ENCODE measurements at regions of chr2 and their contacts with region 1.

Region 1: DNA sequence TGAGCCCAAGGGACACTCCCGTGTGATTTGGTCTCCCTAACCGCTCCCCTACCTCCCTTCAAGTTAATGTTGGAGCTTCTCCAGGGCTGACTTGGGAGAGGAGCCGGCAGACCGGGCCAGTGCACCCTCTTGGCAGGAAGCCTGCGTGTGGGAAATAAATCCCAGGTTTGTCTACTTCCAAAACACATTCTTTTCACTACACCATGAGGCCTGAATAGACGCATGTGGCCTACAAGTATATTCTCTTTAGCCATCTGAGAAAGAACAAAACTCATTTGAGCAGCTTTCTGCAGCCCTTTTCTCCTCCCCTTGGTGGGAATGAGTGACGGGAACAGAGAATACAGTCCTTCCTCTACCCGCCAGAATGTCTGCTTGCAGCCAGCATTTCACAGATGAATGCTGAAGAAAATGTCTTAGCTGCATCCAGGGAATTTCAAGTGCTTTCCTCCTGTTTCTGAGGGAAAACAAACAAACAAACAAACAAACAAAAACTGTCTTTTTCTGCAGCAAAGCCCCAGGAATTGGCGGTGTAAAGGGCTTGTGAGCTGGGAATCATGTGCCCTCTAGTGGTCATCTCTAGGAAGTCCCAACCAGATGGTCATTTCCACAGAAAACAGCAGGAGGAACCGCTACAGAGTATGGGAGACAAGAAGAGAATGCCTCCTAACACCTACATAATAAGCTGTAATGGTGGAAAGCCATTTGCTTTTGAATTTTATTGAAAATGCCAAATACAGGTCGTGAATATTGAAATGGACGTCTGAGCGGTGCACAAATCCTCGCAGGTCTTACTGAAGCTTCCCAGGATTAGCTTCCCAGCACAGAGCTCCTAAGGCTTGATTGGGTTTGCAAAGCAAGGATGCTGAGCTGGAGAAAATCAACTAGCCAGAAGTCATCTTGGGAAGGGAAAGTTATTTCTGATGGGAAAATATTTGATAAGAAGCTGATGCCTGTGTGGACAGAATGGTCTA is 41.2 kb upstream of the DAPL1 start:
- DNase-seq: peak in 2 of 5 donors; percentile 21 to 31
- H3K4me3 ChIP-seq: no peak overlapping the region
- H3K4me3 Mint-ChIP-seq: no peak overlapping the region
- H3K27ac ChIP-seq: no peak overlapping the region
- H3K27ac Mint-ChIP-seq: no peak overlapping the region
- H3K4me1 ChIP-seq: no peaks in the 10 kb centered on the region
- H3K4me1 Mint-ChIP-seq: no peaks in the 10 kb centered on the region
- H3K27me3 ChIP-seq: no peaks in the 10 kb centered on the region
- H3K27me3 Mint-ChIP-seq: peaks cover 6 to 38% of the 10 kb centered on the region in 2 donors

Region 2: DNA sequence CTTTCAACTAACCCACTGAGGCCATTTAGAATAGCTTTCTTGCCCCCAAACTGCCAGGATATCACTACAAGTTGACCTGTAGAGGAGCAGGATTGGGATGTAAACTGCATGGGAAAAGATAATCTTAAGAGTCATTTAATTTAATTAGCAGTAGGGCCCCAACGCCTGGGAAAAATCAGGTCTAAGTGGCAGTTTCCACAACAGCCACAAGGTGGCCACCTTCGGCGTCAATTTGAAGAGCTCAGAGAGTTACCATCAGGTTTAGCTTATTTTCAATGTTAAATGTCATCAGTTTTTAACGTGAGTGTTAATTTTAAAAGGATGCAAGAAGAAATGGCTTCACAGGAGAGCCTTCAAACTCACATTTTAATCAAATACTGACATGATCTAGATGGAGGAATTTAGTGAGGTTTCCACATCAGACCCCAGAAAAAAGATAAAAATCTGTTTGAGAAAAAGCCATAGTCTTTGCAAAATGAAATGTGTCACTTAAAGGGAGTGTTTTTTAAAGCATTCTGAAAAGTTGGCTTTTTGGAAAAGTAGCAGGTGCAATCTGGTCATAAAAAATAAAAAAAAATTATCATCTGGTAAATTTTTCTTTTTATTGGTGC is 729.5 kb before region 1 on chr2:
- CTCF ChIA-PET with region 1: interaction called, 47 read pairs
- POLR2A ChIA-PET with region 1: no interaction called
- DNase-seq: peak in 4 of 5 donors; percentile 13 to 54 (median 21)
- H3K4me3 ChIP-seq: no peak overlapping the region
- H3K4me3 Mint-ChIP-seq: no peak overlapping the region
- H3K27ac ChIP-seq: no peak overlapping the region
- H3K27ac Mint-ChIP-seq: no peak overlapping the region
- H3K4me1 ChIP-seq: no peaks in the 10 kb centered on the region
- H3K4me1 Mint-ChIP-seq: peaks cover 0 to 10% (median 4%) of the 10 kb centered on the region in 3 donors
- H3K27me3 ChIP-seq: no peaks in the 10 kb centered on the region
- H3K27me3 Mint-ChIP-seq: peaks cover 0 to 7% of the 10 kb centered on the region in 2 donors

Region 3: GRCh38 chr2:158034199-158034866 is 719.6 kb before region 1 on chr2:
- CTCF ChIA-PET with region 1: interaction called, 10 read pairs
- POLR2A ChIA-PET with region 1: no interaction called
- DNase-seq: no peak
- H3K4me3 ChIP-seq: no peak overlapping the region
- H3K4me3 Mint-ChIP-seq: no peak overlapping the region
- H3K27ac ChIP-seq: no peak overlapping the region
- H3K27ac Mint-ChIP-seq: peak overlapping the region in 2 of 8 donors; percentile 56 to 74
- H3K4me1 ChIP-seq: no peaks in the 10 kb centered on the region
- H3K4me1 Mint-ChIP-seq: no peaks in the 10 kb centered on the region
- H3K27me3 ChIP-seq: no peaks in the 10 kb centered on the region
- H3K27me3 Mint-ChIP-seq: peaks cover 12 to 31% of the 10 kb centered on the region in 2 donors

Region 4: DNA sequence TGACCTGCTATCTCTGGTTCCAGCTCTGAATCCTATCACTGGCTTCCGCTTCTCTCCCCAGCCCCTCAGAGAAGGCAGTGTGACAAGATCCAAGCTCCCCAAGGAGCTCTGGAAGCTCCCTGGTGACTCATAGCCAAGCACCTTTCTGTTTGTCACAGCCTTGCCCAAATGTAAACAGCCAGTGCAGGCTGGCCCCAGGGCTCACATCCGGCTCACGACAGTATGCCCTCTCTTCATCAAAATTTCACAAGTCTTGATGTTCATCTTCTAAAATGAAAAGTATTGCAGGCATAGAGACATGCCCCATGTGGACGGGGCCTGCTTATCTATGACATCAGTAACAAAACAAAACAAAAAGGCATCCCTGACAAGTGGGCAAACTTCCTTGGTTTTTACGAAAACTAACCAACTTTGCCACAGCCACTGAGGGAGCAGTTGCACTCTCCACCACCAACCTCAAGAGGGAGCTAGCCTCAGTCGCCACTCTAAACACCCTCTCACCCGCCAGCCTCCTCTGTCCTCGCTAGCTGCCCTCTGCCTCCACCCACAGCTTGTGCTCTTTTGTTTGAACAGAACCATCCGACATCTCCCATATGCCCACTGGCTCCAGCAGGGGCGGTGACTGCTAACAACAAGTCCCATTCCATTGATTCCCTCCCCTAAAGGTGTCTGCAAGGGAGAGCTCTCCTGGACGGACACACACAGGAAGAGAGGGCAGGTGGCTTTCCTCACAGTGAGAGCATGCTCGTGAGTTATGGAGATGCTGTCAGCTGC is 29.8 kb before region 1 on chr2:
- CTCF ChIA-PET with region 1: no interaction called
- POLR2A ChIA-PET with region 1: no interaction called
- DNase-seq: no peak
- H3K4me3 ChIP-seq: no peak overlapping the region
- H3K4me3 Mint-ChIP-seq: no peak overlapping the region
- H3K27ac ChIP-seq: no peak overlapping the region
- H3K27ac Mint-ChIP-seq: no peak overlapping the region
- H3K4me1 ChIP-seq: no peaks in the 10 kb centered on the region
- H3K4me1 Mint-ChIP-seq: no peaks in the 10 kb centered on the region
- H3K27me3 ChIP-seq: no peaks in the 10 kb centered on the region
- H3K27me3 Mint-ChIP-seq: peaks cover 3 to 24% of the 10 kb centered on the region in 2 donors

Region 5: DNA sequence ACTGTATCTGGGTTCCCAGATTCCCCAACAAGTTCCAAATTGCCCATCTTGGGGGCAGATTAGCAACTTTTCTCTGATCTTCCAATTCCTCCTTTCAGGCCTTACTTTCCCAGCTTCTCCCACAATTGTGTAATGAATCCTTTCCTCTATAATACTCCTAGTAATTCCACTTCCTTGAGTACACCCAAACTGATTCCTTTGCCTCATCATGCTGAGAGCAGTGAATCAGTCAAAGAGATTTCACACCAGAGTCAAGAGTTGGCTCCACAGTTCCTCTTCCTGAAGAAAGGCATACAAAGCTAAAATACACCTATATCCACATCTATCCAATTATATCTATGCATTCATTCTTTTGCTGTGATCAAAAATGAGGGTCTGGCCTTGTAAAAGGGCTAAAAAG is 12.6 kb after region 1 on chr2:
- CTCF ChIA-PET with region 1: interaction called, 12 read pairs
- POLR2A ChIA-PET with region 1: no interaction called
- DNase-seq: no peak
- H3K4me3 ChIP-seq: no peak overlapping the region
- H3K4me3 Mint-ChIP-seq: no peak overlapping the region
- H3K27ac ChIP-seq: no peak overlapping the region
- H3K27ac Mint-ChIP-seq: no peak overlapping the region
- H3K4me1 ChIP-seq: no peaks in the 10 kb centered on the region
- H3K4me1 Mint-ChIP-seq: no peaks in the 10 kb centered on the region
- H3K27me3 ChIP-seq: no peaks in the 10 kb centered on the region
- H3K27me3 Mint-ChIP-seq: peaks cover 0 to 2% of the 10 kb centered on the region in 2 donors